Activated B cell treated with CpG ODN at 0.5 μM for 24 hours (primary cell): ENCODE measurements at regions of chr2 and their contacts with region 1.

Region 1: DNA sequence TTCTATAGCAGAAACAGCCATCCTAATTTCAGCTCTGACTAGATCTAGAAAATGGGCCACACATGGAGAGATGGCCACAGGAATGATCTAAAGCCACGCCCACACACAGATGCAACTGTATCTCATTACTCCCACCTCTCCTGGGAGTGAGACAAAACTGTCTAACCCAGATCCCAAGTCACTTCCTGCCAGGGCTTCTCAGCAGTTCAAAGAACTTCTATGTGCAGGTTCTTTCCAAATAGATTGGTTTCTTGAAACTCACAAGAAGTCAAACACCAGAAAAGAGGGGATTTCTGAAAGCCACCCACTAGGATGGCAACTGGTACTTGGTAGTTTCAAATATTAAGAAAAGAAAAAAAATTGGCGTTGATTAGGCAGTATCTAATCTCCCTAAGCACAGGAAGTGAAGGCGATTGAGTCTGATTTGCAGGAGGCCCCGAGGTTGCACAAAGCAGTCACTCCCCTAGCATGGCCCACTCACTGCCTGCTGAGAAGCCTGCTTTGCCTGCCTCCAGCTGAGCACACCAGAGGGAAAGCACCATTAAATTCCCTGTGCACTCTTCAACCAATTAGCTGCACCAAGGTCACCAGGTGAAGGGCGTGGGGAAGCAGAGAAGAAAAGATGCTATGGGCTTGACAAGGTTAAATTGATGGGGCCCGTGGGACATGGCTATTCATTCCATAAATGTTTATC is 51.1 kb downstream of the PAPOLG start:
- DNase-seq: peak; percentile 34
- ATAC-seq: peak; percentile 93
- H3K4me3 Mint-ChIP-seq: peak overlapping the region; percentile 59
- H3K27ac Mint-ChIP-seq: peak overlapping the region; percentile 93
- H3K4me1 Mint-ChIP-seq: peaks cover 54% of the 10 kb centered on the region
- H3K27me3 Mint-ChIP-seq: no peaks in the 10 kb centered on the region
- CTCF ChIP-seq: no peak

Region 2: DNA sequence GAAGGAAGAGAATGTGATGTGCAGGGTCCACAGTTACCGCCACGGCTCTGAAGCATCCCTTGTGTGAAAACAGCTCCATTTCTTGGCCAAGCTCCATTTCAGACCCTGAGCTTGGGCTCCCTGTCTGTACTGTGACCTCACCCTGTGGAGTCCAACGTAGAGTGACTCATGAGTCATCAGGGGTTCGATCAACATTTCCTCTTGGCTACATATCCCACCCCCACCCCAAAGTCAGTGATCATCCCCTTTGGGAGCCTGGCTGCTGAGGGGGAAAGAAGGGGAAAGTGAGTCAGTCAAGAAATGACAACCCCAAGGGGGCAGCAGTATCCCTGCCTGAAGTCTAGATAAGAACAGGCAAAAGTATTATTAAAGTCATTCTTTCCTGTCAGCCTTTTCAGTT is 11.1 kb after region 1 on chr2:
- CTCF ChIA-PET with region 1: interaction called, 8 read pairs
- POLR2A ChIA-PET with region 1: interaction called, 11 read pairs
- intact Hi-C with region 1: loop called (anchors 1 kb)
- DNase-seq: no peak
- ATAC-seq: peak; percentile 72
- H3K4me3 Mint-ChIP-seq: peak overlapping the region; percentile 50
- H3K27ac Mint-ChIP-seq: peak overlapping the region; percentile 67
- H3K4me1 Mint-ChIP-seq: peaks cover 50% of the 10 kb centered on the region
- H3K27me3 Mint-ChIP-seq: no peaks in the 10 kb centered on the region
- CTCF ChIP-seq: no peak

Region 3: GRCh38 chr2:60873381-60873780 is 66.2 kb after region 1 on chr2:
- CTCF ChIA-PET with region 1: interaction called, 4 read pairs
- POLR2A ChIA-PET with region 1: interaction called, 9 read pairs
- intact Hi-C with region 1: loop called (anchors 1 kb)
- DNase-seq: no peak
- ATAC-seq: peak; percentile 83
- H3K4me3 Mint-ChIP-seq: peak overlapping the region; percentile 67
- H3K27ac Mint-ChIP-seq: peak overlapping the region; percentile 82
- H3K4me1 Mint-ChIP-seq: peaks cover 57% of the 10 kb centered on the region
- H3K27me3 Mint-ChIP-seq: no peaks in the 10 kb centered on the region
- CTCF ChIP-seq: no peak

Region 4: DNA sequence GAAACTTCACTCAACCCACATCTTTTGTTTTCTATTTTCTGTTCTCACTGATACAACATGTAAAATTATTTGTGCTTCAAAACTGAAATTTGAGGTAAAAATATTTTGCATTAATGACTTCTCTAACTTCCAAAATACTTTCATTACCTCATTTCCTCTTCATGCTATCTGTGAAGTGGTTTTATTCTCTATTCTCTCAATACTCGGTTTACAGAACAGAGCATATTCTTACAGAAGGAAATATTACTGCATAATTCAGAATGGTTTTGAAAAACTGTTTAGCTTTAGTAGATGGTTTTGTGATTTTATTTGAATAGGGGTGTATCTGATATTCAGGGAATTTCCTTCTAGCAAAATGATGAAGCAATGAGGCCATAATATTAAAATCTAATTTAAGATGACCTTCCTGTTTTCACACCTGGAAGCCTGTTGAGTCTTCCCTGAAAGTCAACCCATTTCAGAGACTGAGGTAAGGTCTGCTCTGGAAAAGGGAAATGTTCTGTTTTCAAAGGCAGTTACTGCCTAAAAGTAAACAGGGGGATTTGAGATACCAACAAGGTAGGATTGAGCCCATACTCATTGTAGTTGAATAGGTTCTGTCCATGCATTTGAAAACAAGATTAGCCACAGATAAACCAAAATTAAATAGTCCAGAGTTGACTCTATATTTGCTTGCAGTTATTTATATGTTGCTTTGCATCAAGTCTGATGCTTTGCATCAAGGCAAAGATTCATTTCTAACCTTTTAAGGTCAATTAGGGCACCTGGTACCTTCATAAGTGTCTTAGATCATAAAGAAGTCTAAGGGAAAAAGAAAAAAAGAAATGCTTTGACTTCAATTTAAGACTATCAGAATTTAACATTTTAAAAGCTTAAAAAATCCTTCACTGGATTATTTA is 159.6 kb after region 1 on chr2:
- CTCF ChIA-PET with region 1: no interaction called
- POLR2A ChIA-PET with region 1: interaction called, 13 read pairs
- intact Hi-C with region 1: no loop called
- DNase-seq: no peak
- ATAC-seq: peak; percentile 41
- H3K4me3 Mint-ChIP-seq: peak overlapping the region; percentile 83
- H3K27ac Mint-ChIP-seq: peak overlapping the region; percentile 87
- H3K4me1 Mint-ChIP-seq: peaks cover 84% of the 10 kb centered on the region
- H3K27me3 Mint-ChIP-seq: no peaks in the 10 kb centered on the region
- CTCF ChIP-seq: no peak

Region 5: DNA sequence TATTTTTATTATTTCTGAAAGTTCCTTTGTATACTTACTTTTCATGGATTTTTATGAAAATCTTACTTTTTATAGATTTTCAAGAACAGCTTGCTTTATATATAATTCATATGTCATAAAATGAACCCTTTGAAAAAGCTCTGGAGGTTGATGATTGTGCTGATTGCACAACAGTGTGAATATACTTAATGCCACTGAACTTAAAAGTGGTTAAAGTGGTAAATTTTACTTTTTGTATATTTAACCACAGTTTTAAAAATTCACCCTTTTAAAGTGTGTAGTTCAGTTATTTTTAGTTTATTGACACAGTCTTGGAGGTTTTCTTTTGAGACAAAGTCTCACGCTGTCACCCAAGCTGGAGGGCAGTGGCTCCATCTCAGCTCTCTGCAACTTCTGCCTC is 267.0 kb after region 1 on chr2:
- CTCF ChIA-PET with region 1: no interaction called
- POLR2A ChIA-PET with region 1: no interaction called
- intact Hi-C with region 1: no loop called
- DNase-seq: no peak
- ATAC-seq: no peak
- H3K4me3 Mint-ChIP-seq: no peak overlapping the region
- H3K27ac Mint-ChIP-seq: no peak overlapping the region
- H3K4me1 Mint-ChIP-seq: no peaks in the 10 kb centered on the region
- H3K27me3 Mint-ChIP-seq: no peaks in the 10 kb centered on the region
- CTCF ChIP-seq: no peak